ENCODE measurements at regions of chr5 and their contacts with region 1.

Region 1: GRCh38 chr5:132495667-132496190 is 5.2 kb upstream of the IRF1 start:
- DNase-seq: peak; percentile 92
- ATAC-seq: peak; percentile 49
- H3K4me3 Mint-ChIP-seq: peak overlapping the region; percentile 87
- H3K27ac Mint-ChIP-seq: peak overlapping the region; percentile 95
- H3K4me1 Mint-ChIP-seq: peaks cover 61% of the 10 kb centered on the region
- H3K27me3 Mint-ChIP-seq: no peaks in the 10 kb centered on the region

Region 2: DNA sequence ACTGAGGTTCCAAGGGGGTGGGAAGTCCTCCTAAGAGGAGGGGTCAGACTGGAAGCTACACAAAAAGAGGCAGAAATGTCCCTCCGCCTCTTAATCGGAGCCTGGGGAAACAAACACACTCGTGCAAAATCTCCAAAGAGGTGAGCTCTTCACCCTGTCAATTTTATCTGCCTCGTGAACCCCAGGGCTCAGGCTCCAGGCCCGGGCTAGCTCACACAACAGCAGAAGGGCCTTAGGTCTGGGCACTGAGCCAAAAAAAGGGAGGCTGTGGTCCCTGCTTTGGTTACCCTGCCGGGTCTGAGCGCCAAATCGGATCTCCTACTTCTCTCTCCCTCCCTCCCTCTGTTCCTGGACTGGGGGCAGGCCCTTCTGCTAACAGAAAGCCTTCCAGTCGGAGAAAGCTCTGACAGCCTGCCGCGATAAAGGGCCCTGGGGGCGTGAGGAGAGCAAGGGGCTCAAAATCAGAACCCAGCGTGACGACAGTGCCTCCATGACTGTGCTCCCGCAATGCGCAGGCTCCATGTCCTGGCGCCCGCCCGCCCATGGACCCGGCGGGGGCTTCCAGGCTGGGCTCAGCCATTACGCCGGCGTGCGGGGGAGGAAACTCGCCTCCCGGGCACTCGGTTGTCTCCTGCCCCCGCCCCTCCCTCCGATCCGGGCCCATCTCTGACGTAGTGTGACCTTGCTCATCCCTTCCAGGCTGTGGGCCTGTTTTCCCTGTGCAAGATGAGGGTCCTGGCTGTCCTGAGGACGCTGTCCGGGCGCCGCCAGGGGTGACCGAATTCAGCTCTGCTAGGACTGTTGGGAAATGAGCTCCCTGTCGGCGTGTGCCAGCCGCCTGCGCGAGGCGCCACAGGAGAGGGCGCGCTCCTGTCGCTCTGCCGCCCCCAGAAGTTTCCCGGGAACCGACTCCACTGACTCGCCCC is 202.4 kb before region 1 on chr5:
- CTCF ChIA-PET with region 1: interaction called, 3 read pairs
- POLR2A ChIA-PET with region 1: interaction called, 6 read pairs
- intact Hi-C with region 1: loop called (anchors 1 to 5 kb)
- DNase-seq: peak; percentile 89
- ATAC-seq: peak; percentile 45
- H3K4me3 Mint-ChIP-seq: peak overlapping the region; percentile 88
- H3K27ac Mint-ChIP-seq: peak overlapping the region; percentile 94
- H3K4me1 Mint-ChIP-seq: peaks cover 22% of the 10 kb centered on the region
- H3K27me3 Mint-ChIP-seq: peaks cover 10% of the 10 kb centered on the region

Region 3: DNA sequence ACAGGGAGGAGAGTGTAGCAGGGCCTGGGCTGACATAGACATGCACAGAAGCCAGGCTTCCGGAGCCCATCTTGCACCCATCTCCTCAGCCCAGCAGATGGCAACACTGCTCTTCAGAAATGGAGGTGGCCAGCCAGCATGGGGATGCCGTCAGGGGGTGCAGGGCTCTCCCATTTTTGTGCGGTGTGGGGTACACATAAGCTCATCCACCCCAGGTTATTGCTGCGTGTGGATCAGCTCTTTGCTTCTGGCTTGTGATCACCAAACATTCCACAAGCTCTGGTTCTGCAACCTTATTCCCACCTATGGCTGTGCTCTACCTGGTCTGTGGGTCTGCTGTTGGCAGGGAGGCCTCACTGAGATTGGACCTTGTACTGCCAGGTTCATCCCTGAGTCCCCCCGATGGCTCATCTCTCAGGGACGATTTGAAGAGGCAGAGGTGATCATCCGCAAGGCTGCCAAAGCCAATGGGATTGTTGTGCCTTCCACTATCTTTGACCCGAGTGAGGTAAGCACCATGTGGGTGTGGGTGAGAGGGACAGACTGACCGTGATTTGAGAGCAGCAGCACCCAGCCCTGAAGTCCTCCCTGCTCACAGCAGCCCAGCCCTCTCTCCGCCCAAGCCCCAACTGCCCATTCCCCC is 109.0 kb before region 1 on chr5:
- CTCF ChIA-PET with region 1: interaction called, 308 read pairs
- POLR2A ChIA-PET with region 1: interaction called, 7 read pairs
- intact Hi-C with region 1: loop called in 1 of 2 experiments (anchors 1 kb)
- DNase-seq: peak; percentile 88
- ATAC-seq: peak; percentile 87
- H3K4me3 Mint-ChIP-seq: no peak overlapping the region
- H3K27ac Mint-ChIP-seq: peak overlapping the region; percentile 29
- H3K4me1 Mint-ChIP-seq: peaks cover 40% of the 10 kb centered on the region
- H3K27me3 Mint-ChIP-seq: no peaks in the 10 kb centered on the region

Region 4: DNA sequence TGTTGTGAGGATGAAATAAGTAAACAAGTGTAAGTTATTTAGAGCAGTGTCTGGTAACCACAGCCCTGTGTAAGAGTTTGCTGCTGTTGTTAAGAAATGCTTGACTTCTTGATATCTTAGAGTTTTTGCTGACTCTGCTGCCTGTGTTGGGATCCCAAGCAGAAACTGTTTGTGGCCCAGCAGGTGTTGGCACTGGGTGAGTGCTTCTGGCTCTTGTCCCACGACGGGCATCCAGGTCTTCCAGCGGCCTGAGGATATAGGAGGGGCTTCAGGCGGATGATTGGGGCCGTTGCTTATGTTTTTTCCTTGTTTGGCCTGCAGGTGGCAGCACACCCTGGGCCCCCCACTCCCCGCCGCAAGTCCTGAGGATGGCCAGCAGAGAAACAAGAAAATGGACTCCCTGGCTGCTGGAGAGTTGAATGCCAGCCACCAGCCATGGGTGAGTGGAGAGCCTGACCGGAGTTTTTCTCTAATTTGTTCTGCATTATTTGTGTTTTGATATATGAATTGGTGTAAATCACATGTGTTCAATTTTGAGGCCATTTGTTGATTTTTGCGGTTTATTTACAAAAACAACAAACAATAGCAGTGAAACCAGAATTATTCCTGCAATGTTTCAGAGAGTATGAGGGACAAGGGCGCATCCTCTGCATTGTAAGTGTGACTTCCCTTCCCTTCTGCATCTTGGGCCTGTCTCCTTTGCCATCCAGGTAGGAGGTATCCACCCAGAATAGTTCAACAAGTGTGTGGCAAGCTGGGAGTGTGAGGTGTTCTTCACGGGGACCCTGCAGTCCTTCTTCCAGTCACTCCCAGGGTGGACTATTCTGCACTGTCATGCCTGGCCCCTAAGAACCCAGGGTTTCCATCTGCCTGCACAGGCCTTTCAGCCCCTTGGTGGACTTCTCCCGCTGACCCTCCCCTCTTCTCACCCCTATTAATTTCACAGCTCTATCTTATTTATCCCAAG is 75.9 kb before region 1 on chr5:
- CTCF ChIA-PET with region 1: interaction called, 11 read pairs
- POLR2A ChIA-PET with region 1: interaction called, 130 read pairs
- intact Hi-C with region 1: loop called in 1 of 2 experiments (anchors 1 kb)
- DNase-seq: peak; percentile 75
- ATAC-seq: peak; percentile 65
- H3K4me3 Mint-ChIP-seq: peak overlapping the region; percentile 37
- H3K27ac Mint-ChIP-seq: peak overlapping the region; percentile 90
- H3K4me1 Mint-ChIP-seq: peaks cover 83% of the 10 kb centered on the region
- H3K27me3 Mint-ChIP-seq: no peaks in the 10 kb centered on the region

Region 5: GRCh38 chr5:132456296-132457001 is 39.3 kb before region 1 on chr5:
- CTCF ChIA-PET with region 1: interaction called, 5 read pairs
- POLR2A ChIA-PET with region 1: interaction called, 22 read pairs
- intact Hi-C with region 1: loop called (anchors 2 to 5 kb)
- DNase-seq: peak; percentile 79
- ATAC-seq: peak; percentile 68
- H3K4me3 Mint-ChIP-seq: peak overlapping the region; percentile 49
- H3K27ac Mint-ChIP-seq: peak overlapping the region; percentile 96
- H3K4me1 Mint-ChIP-seq: peaks cover 90% of the 10 kb centered on the region
- H3K27me3 Mint-ChIP-seq: no peaks in the 10 kb centered on the region

Region 6: DNA sequence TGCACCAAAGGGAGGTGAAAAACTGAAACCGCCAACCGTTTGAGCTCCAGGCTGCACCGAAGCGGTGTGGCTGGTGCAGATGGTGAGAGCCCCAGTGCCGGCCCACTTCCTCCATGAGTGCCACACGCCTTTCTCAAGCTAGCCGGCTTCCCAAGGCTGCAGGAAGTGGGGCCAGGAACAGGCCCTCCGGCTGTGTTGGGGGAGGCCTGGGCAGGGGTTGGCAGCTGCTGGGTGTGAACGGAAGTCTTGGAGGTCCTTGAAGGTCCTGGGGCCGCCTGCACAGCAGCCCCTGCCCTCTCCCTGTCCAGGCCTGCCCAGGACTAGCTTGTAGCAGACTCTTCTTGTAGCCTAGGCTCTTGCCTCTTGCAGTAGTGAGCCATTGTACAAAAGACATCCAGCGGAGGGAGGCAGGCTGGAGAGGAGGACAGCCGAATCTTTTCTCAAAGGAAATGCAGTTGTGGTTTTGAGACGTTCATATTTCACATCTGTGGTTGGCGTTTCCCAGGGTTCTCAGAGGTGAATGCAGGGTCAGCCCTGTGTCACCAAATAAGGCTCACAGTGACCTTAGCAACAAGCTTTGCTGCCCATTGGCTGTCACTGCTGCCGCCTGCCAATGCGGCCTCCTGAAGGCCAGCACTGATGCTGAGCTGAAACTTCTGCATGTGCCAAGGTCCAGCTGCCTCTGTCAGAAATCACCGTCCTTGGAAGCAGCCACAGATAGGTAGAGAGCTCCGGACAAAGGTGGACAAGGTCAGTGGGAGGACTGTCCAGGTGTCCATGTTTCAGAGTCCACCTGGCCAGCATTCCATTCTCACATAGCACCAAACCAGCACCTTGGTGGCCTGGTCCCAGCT is 29.1 kb before region 1 on chr5:
- CTCF ChIA-PET with region 1: interaction called, 16 read pairs
- POLR2A ChIA-PET with region 1: interaction called, 30 read pairs
- intact Hi-C with region 1: no loop called
- DNase-seq: peak; percentile 78
- ATAC-seq: peak; percentile 61
- H3K4me3 Mint-ChIP-seq: peak overlapping the region; percentile 51
- H3K27ac Mint-ChIP-seq: peak overlapping the region; percentile 51
- H3K4me1 Mint-ChIP-seq: peaks cover 88% of the 10 kb centered on the region
- H3K27me3 Mint-ChIP-seq: no peaks in the 10 kb centered on the region

Region 7: GRCh38 chr5:132473019-132473531 is 22.7 kb before region 1 on chr5:
- CTCF ChIA-PET with region 1: interaction called, 6 read pairs
- POLR2A ChIA-PET with region 1: interaction called, 116 read pairs
- intact Hi-C with region 1: no loop called
- DNase-seq: peak; percentile 83
- ATAC-seq: peak; percentile 94
- H3K4me3 Mint-ChIP-seq: no peak overlapping the region
- H3K27ac Mint-ChIP-seq: peak overlapping the region; percentile 93
- H3K4me1 Mint-ChIP-seq: peaks cover 59% of the 10 kb centered on the region
- H3K27me3 Mint-ChIP-seq: no peaks in the 10 kb centered on the region

Measured in activated CD4-positive, alpha-beta T cell treated with anti-CD3 and anti-CD28 coated beads for 36 hours (primary cell).